CD8-positive, alpha-beta T cell (primary cell): ENCODE measurements at regions of chr5 and their contacts with region 1.

Region 1: DNA sequence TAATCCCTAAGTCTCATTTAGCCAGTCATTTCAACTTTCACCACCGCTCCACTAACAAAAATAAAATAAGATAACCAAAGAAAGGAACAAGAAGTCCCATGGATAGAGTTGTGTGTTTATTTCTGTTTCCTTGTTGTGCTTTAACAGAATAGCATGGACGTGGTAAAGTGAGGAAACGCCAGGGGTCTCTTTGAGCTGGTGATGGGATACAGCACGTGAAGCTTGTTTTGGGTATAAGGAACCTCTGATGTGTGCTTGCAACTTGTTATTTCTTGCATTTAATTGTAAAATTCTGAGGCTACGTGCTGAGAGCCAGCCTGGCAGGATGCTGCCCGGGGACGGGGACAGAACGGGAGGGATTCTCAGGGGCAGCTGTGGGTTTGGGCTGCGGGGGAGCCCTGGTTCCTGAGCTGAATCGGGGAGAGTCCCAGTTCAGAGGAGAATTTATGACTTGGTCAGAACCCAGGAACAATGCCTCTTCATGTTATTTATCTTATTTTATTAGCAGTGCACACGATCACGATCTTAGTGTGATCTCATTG is 63.4 kb downstream of the ANKRD33B start:
- DNase-seq: peak in 1 of 9 experiments; percentile 21
- ATAC-seq: no peak
- H3K4me3 ChIP-seq: peak overlapping the region; percentile 33 to 61
- H3K4me3 Mint-ChIP-seq: peak overlapping the region; percentile 82
- H3K27ac ChIP-seq: no peak overlapping the region
- H3K27ac Mint-ChIP-seq: peak overlapping the region; percentile 61
- H3K4me1 ChIP-seq: peaks cover 7% of the 10 kb centered on the region
- H3K4me1 Mint-ChIP-seq: peaks cover 17% of the 10 kb centered on the region
- H3K27me3 ChIP-seq: no peaks in the 10 kb centered on the region
- H3K27me3 Mint-ChIP-seq: no peaks in the 10 kb centered on the region
- CTCF ChIP-seq: no peak

Region 2: GRCh38 chr5:10611290-10611689 is 15.9 kb before region 1 on chr5:
- CTCF ChIA-PET with region 1: interaction called, 10 read pairs
- POLR2A ChIA-PET with region 1: no interaction called
- intact Hi-C with region 1: no loop called
- DNase-seq: peak in 1 of 9 experiments; percentile 4
- ATAC-seq: no peak
- H3K4me3 ChIP-seq: no peak overlapping the region
- H3K4me3 Mint-ChIP-seq: no peak overlapping the region
- H3K27ac ChIP-seq: no peak overlapping the region
- H3K27ac Mint-ChIP-seq: no peak overlapping the region
- H3K4me1 ChIP-seq: peaks cover 6% of the 10 kb centered on the region
- H3K4me1 Mint-ChIP-seq: peaks cover 8% of the 10 kb centered on the region
- H3K27me3 ChIP-seq: no peaks in the 10 kb centered on the region
- H3K27me3 Mint-ChIP-seq: peaks cover 19% of the 10 kb centered on the region
- CTCF ChIP-seq: no peak

Region 3: GRCh38 chr5:10645146-10645545 is 17.9 kb after region 1 on chr5:
- CTCF ChIA-PET with region 1: interaction called, 10 read pairs
- POLR2A ChIA-PET with region 1: no interaction called
- intact Hi-C with region 1: no loop called
- DNase-seq: no peak
- ATAC-seq: no peak
- H3K4me3 ChIP-seq: no peak overlapping the region
- H3K4me3 Mint-ChIP-seq: no peak overlapping the region
- H3K27ac ChIP-seq: no peak overlapping the region
- H3K27ac Mint-ChIP-seq: no peak overlapping the region
- H3K4me1 ChIP-seq: no peaks in the 10 kb centered on the region
- H3K4me1 Mint-ChIP-seq: peaks cover 1% of the 10 kb centered on the region
- H3K27me3 ChIP-seq: no peaks in the 10 kb centered on the region
- H3K27me3 Mint-ChIP-seq: peaks cover 4% of the 10 kb centered on the region
- CTCF ChIP-seq: no peak

Region 4: DNA sequence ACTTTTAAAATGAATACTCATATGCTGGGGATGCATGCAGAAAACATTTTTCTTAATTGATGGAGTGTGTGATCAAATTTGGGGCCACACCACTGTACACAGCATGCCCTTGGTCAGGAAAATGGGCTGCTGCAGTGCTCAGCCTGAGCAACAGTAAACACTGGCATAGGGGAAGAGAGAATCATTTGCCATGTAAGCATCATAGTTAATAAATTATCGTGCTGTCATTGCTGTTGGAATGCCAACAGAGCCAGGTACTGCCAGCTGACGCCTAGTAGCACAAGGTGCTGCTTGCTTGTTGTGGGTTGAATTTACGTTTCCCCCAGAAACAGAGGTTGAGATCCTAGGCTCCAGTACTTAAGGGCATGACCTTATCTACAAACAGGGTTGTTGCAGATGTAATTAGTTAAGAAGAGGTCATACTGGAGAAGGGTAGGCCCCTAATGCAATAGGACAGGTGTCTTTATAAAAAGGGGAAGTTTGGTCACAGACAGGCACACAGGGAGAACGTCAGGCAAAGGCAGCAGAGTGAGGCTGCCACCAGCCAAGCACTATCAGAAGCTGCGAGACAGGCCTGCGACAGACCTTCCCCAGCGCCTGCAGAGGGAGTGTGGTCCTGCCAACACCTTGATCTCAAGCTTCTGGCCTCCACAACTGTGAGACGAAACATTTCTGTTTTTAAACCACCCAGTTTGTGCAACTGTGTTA is 108.5 kb after region 1 on chr5:
- CTCF ChIA-PET with region 1: no interaction called
- POLR2A ChIA-PET with region 1: no interaction called
- intact Hi-C with region 1: no loop called
- DNase-seq: no peak
- ATAC-seq: peak; percentile 34
- H3K4me3 ChIP-seq: no peak overlapping the region
- H3K4me3 Mint-ChIP-seq: no peak overlapping the region
- H3K27ac ChIP-seq: no peak overlapping the region
- H3K27ac Mint-ChIP-seq: no peak overlapping the region
- H3K4me1 ChIP-seq: no peaks in the 10 kb centered on the region
- H3K4me1 Mint-ChIP-seq: peaks cover 21% of the 10 kb centered on the region
- H3K27me3 ChIP-seq: no peaks in the 10 kb centered on the region
- H3K27me3 Mint-ChIP-seq: no peaks in the 10 kb centered on the region
- CTCF ChIP-seq: no peak